ENCODE measurements at regions of chr5 and their contacts with region 1.

Region 1: DNA sequence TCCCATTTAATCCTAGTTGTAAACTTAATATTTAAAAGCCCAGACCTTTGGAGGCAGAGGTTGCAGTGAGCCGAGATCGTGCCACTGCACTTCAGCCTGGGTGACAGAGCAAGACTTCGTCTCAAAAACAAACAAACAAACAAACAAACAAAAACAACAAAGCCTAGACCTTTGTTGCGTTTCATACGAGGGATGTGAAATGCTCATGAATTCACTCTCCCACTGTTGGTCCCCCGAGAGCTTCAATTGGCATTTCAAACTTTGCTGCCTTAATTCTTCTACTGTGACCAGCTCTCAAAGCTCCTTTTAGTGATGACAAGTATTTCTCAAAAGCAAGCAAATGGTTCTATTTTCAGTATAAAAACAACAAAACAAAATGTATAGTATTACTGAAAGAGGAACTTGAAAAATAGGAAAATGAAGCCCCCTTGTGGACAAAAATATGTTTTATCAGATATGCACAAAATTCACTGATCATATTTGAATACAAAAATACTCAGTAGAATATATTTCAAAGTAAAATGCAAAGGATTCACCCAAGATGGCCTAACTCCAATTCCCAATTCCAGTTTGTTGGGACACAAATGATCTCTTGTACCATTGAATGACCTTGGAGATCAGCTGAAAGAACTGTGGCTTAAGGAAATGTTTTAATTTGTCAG is 140.4 kb downstream of the ESM1 start:
- DNase-seq: no peak
- H3K4me3 Mint-ChIP-seq: no peak overlapping the region
- H3K27ac Mint-ChIP-seq: no peak overlapping the region
- H3K4me1 Mint-ChIP-seq: peaks cover 15% of the 10 kb centered on the region
- H3K27me3 Mint-ChIP-seq: peaks cover 9% of the 10 kb centered on the region

Region 2: GRCh38 chr5:54753034-54753433 is 92.0 kb before region 1 on chr5:
- intact Hi-C with region 1: no loop called
- DNase-seq: peak; percentile 34
- H3K4me3 Mint-ChIP-seq: peak overlapping the region; percentile 34
- H3K27ac Mint-ChIP-seq: peak overlapping the region; percentile 76
- H3K4me1 Mint-ChIP-seq: peaks cover 32% of the 10 kb centered on the region
- H3K27me3 Mint-ChIP-seq: no peaks in the 10 kb centered on the region

Region 3: GRCh38 chr5:54867310-54867944 is 22.4 kb after region 1 on chr5:
- intact Hi-C with region 1: loop called (anchors 2 kb)
- DNase-seq: no peak
- H3K4me3 Mint-ChIP-seq: no peak overlapping the region
- H3K27ac Mint-ChIP-seq: no peak overlapping the region
- H3K4me1 Mint-ChIP-seq: peaks cover 29% of the 10 kb centered on the region
- H3K27me3 Mint-ChIP-seq: peaks cover 64% of the 10 kb centered on the region

Region 4: GRCh38 chr5:54915466-54916027 is 70.5 kb after region 1 on chr5:
- intact Hi-C with region 1: no loop called
- DNase-seq: no peak
- H3K4me3 Mint-ChIP-seq: no peak overlapping the region
- H3K27ac Mint-ChIP-seq: no peak overlapping the region
- H3K4me1 Mint-ChIP-seq: peaks cover 10% of the 10 kb centered on the region
- H3K27me3 Mint-ChIP-seq: peaks cover 28% of the 10 kb centered on the region

Region 5: DNA sequence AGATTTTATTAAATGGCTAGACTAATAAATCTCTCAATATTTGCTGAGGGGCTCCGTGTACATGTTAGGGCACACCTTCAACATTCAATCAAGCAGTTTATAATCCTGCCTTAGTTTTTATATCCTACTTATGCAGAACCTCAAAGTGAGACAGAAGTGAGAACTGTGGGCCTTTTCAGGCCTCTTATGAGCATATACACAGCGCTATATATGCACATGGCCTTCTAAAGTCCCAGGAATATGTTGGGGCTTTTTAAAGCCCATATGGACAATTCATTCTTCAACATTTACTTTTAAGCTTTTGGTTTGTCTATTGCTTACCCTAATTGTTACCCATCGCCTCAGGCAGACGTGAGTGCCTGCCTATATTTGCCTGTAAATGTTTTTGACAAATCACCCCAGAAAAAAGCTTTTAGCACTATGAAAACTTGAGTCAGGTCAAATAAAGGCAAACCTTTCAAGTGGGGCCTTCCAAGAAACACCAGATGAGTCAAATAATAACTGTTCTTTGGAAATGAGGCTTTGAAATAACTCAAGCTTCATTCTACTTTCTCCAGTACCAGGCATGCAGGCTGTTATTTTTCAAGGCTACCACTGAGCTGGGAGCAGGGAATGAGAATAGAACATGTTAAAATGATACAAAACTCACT is 82.2 kb after region 1 on chr5:
- intact Hi-C with region 1: no loop called
- DNase-seq: no peak
- H3K4me3 Mint-ChIP-seq: no peak overlapping the region
- H3K27ac Mint-ChIP-seq: peak overlapping the region; percentile 56
- H3K4me1 Mint-ChIP-seq: peaks cover 21% of the 10 kb centered on the region
- H3K27me3 Mint-ChIP-seq: no peaks in the 10 kb centered on the region

Measured in activated T-helper 2 cell treated with anti-CD3 and anti-CD28 coated beads, Interferon-gamma antibody, Interleukin-2, Interleukin-4, amounts not matched to agents 10 μg/mL and 5 μg/mL and 100 μg/mL, durations not matched to agents 14 hours and 24 hours and 36 hours (primary cell).